Vagina (tissue), 2 donors: ENCODE measurements at regions of chr7 and their contacts with region 1.

Region 1: DNA sequence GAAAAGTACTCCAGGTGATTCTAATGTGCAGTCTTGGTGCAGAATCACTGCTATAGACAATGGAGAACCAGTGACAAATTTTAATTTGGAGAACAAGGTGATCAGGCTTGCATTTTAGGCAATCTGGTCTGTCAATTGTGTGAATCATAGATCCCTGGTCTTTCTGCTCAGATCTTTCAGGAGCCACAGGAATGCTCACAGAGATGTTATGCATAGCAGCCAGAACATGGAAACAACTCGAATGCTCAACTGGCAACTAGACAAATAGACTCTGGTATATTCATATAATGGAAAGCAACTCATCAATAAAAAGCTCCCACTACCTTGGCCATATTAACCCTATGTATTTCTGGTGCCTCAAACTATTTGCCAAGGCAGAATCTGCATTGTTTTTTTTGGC is 209.1 kb downstream of the PHF14 start:
- DNase-seq: no peak
- H3K4me3 ChIP-seq: no peak overlapping the region
- H3K27ac ChIP-seq: no peak overlapping the region
- H3K4me1 ChIP-seq: no peaks in the 10 kb centered on the region
- H3K27me3 ChIP-seq: no peaks in the 10 kb centered on the region
- CTCF ChIP-seq: no peak
- POLR2A ChIP-seq: no peak

Region 2: GRCh38 chr7:11026452-11027359 is 156.0 kb before region 1 on chr7:
- intact Hi-C with region 1: no loop called
- DNase-seq: no peak
- H3K4me3 ChIP-seq: no peak overlapping the region
- H3K27ac ChIP-seq: no peak overlapping the region
- H3K4me1 ChIP-seq: no peaks in the 10 kb centered on the region
- H3K27me3 ChIP-seq: no peaks in the 10 kb centered on the region
- CTCF ChIP-seq: no peak
- POLR2A ChIP-seq: no peak

Region 3: GRCh38 chr7:11450281-11450680 is 267.5 kb after region 1 on chr7:
- intact Hi-C with region 1: loop called (anchors 5 kb)
- DNase-seq: no peak
- H3K4me3 ChIP-seq: no peak overlapping the region
- H3K27ac ChIP-seq: no peak overlapping the region
- H3K4me1 ChIP-seq: peaks cover 7% of the 10 kb centered on the region
- H3K27me3 ChIP-seq: no peaks in the 10 kb centered on the region
- CTCF ChIP-seq: no peak
- POLR2A ChIP-seq: no peak